Tibial artery (tissue), 4 donors: ENCODE measurements at regions of chr6 and their contacts with region 1.

Region 1: DNA sequence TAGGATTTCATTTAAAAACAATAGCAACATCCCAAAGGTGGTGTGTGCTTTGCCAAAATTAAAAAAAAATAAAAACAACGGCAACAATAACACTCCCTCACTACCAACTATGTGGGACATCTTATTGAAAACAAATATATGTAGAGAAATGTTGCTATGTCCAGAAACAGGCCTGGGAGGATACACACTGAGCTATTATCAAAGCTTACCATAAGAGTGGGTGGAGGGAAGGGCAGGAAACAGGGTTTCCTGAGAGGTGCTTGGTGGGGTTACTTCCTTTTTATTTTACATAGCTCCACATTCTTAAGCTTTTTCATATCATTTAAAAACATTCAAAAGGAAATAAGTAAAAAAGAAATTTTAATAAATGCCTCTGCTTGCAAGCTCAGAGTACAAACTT is 150.0 kb upstream of the RIPOR2 start:
- DNase-seq: no peak
- H3K4me3 ChIP-seq: no peak overlapping the region
- H3K27ac ChIP-seq: no peak overlapping the region
- H3K4me1 ChIP-seq: no peaks in the 10 kb centered on the region
- H3K27me3 ChIP-seq: no peaks in the 10 kb centered on the region
- CTCF ChIP-seq: no peak

Region 2: DNA sequence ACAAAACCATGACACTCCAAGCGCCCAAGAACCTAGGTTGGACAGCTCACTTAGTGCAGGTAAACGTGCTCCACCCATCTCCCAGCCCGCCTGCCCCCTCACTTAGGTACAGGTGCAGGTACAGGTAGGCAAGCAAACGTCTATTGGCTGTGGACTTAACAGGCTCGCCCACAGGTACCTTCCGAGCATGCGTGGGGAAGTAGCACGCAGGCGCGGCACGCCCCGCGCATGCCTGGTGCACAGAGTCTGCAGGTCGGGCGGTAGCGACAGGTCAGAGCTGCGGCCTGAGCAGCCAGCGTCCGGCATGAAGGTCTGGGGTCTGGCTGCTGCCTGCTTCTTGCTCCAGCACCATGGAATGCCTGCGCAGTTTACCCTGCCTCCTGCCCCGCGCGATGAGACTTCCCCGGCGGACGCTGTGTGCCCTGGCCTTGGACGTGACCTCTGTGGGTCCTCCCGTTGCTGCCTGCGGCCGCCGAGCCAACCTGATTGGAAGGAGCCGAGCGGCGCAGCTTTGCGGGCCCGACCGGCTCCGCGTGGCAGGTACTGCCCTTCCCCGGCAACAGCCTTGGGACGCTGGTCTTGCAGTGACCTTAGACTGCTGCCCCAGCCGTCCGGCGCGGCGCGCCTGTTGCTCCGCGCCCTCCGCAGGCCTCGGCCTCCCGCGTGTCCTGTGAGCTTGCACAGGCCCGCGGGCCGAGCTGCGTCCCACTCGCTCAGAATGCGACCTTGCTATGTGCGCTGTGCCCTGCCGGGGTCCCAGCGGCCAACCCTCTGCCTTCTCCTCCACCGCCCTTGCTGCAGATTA is 682.9 kb before region 1 on chr6 and contains the start of gene MRS2:
- intact Hi-C with region 1: loop called (anchors 5 kb)
- DNase-seq: peak; percentile 80 to 91
- H3K4me3 ChIP-seq: peak within 1 kb of the TSS; percentile 70 to 80
- H3K27ac ChIP-seq: peak within 1 kb of the TSS; percentile 71 to 81
- H3K4me1 ChIP-seq: peaks cover 0 to 24% (median 8%) of the 10 kb centered on the region in 4 donors
- H3K27me3 ChIP-seq: peaks cover 0 to 12% of the 10 kb centered on the region in 2 donors
- CTCF ChIP-seq: no peak

Region 3: DNA sequence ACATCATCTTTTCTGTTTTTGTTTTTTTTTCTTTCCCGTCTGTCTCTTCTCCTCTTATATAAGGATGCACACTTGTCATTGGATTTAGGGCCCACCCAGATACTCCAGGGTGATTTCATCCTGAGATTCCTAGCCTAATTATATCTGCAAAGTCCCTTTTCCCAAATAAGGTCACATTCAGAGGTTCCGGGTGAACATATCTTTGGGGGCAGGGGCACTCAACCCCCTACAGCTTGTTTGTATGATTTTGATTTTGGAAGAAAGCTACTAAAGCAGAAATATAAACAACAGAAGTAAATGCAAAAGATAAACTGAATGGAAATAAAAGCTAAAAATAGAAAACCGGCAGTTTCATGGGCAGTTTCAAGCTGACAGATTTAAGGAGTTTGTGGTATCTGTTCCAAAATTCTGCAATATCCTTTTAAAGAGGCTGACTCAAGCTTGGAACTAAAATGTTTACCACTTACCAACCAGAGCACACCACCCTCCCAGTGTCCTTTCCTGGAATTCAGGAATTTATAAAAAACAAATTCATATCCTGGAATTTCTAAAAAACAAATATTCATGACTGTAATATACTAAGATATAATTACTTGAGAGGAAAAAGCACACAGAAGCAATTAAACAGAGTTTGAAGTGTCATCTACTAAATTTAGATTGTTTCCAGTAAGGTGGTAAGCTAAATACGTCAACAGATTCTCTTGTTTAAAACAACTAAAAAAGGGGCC is 93.5 kb after region 1 on chr6:
- intact Hi-C with region 1: no loop called
- DNase-seq: no peak
- H3K4me3 ChIP-seq: no peak overlapping the region
- H3K27ac ChIP-seq: peak overlapping the region; percentile 65 to 67
- H3K4me1 ChIP-seq: peaks cover 0 to 51% (median 23%) of the 10 kb centered on the region in 4 donors
- H3K27me3 ChIP-seq: no peaks in the 10 kb centered on the region
- CTCF ChIP-seq: no peak